ENCODE measurements at regions of chr15 and their contacts with region 1.

Region 1: GRCh38 chr15:79853458-79854328 is 43.1 kb downstream of the MTHFS start:
- DNase-seq: peak; percentile 73
- ATAC-seq: peak; percentile 97
- H3K4me3 ChIP-seq: no peak overlapping the region
- H3K4me3 Mint-ChIP-seq: no peak overlapping the region
- H3K27ac ChIP-seq: no peak overlapping the region
- H3K27ac Mint-ChIP-seq: no peak overlapping the region
- H3K4me1 ChIP-seq: peaks cover 7 to 8% of the 10 kb centered on the region in 2 donors
- H3K4me1 Mint-ChIP-seq: peaks cover 29% of the 10 kb centered on the region
- H3K27me3 ChIP-seq: no peaks in the 10 kb centered on the region
- H3K27me3 Mint-ChIP-seq: no peaks in the 10 kb centered on the region
- CTCF ChIP-seq: peak; percentile 98

Region 2: GRCh38 chr15:79339564-79340314 is 514.0 kb before region 1 on chr15:
- CTCF ChIA-PET with region 1: interaction called, 12 read pairs
- POLR2A ChIA-PET with region 1: no interaction called
- intact Hi-C with region 1: no loop called
- DNase-seq: peak; percentile 20
- ATAC-seq: no peak
- H3K4me3 ChIP-seq: no peak overlapping the region
- H3K4me3 Mint-ChIP-seq: no peak overlapping the region
- H3K27ac ChIP-seq: no peak overlapping the region
- H3K27ac Mint-ChIP-seq: no peak overlapping the region
- H3K4me1 ChIP-seq: no peaks in the 10 kb centered on the region
- H3K4me1 Mint-ChIP-seq: no peaks in the 10 kb centered on the region
- H3K27me3 ChIP-seq: no peaks in the 10 kb centered on the region
- H3K27me3 Mint-ChIP-seq: no peaks in the 10 kb centered on the region
- CTCF ChIP-seq: peak; percentile 77

Region 3: DNA sequence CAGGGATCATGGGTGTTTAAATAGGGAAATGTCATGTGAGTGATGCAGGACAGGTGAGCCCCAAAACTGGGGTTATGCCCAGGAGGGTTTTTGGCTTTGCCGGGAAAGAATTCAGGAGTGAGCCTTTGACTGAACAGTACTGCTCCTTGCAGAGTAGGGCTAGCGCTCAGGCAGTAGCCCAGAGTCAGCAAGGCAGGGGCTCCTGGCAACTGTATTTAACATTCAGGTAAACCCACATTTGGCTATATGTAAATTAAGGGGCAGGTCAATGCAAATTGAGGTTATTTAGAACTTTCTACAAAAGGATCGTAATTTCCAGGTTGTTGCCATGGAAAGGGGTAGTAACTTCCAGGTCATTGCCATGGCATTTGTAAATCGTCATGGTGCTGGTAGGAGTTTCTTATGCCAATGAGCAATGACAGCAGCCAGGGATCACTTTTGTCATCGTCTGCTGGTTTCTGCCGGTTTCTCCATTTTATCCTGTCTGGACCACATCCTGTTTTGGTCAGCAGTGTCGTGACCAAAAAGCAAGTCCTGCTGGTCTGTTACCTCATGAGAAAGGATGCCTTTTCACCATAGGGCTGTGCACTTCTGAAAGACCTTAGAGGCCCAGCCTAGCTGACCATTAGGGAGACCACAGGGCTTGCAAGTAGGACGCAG is 18.8 kb after region 1 on chr15:
- CTCF ChIA-PET with region 1: interaction called, 19 read pairs
- POLR2A ChIA-PET with region 1: no interaction called
- intact Hi-C with region 1: no loop called
- DNase-seq: peak; percentile 9
- ATAC-seq: no peak
- H3K4me3 ChIP-seq: no peak overlapping the region
- H3K4me3 Mint-ChIP-seq: no peak overlapping the region
- H3K27ac ChIP-seq: no peak overlapping the region
- H3K27ac Mint-ChIP-seq: no peak overlapping the region
- H3K4me1 ChIP-seq: peaks cover 0 to 5% of the 10 kb centered on the region in 2 donors
- H3K4me1 Mint-ChIP-seq: peaks cover 4% of the 10 kb centered on the region
- H3K27me3 ChIP-seq: no peaks in the 10 kb centered on the region
- H3K27me3 Mint-ChIP-seq: no peaks in the 10 kb centered on the region
- CTCF ChIP-seq: no peak

Region 4: GRCh38 chr15:81265944-81266775 is 1412.5 kb after region 1 on chr15:
- CTCF ChIA-PET with region 1: no interaction called
- POLR2A ChIA-PET with region 1: no interaction called
- intact Hi-C with region 1: no loop called
- DNase-seq: peak; percentile 84
- ATAC-seq: peak; percentile 89
- H3K4me3 ChIP-seq: peak overlapping the region in 4 of 5 experiments; percentile 8 to 53 (median 29)
- H3K4me3 Mint-ChIP-seq: peak overlapping the region; percentile 84
- H3K27ac ChIP-seq: no peak overlapping the region
- H3K27ac Mint-ChIP-seq: no peak overlapping the region
- H3K4me1 ChIP-seq: peaks cover 14 to 20% of the 10 kb centered on the region in 2 donors
- H3K4me1 Mint-ChIP-seq: peaks cover 21% of the 10 kb centered on the region
- H3K27me3 ChIP-seq: no peaks in the 10 kb centered on the region
- H3K27me3 Mint-ChIP-seq: no peaks in the 10 kb centered on the region
- CTCF ChIP-seq: peak; percentile 88